Lower lobe of right lung (tissue), 2 donors: ENCODE measurements at regions of chr9 and their contacts with region 1.

Region 1: DNA sequence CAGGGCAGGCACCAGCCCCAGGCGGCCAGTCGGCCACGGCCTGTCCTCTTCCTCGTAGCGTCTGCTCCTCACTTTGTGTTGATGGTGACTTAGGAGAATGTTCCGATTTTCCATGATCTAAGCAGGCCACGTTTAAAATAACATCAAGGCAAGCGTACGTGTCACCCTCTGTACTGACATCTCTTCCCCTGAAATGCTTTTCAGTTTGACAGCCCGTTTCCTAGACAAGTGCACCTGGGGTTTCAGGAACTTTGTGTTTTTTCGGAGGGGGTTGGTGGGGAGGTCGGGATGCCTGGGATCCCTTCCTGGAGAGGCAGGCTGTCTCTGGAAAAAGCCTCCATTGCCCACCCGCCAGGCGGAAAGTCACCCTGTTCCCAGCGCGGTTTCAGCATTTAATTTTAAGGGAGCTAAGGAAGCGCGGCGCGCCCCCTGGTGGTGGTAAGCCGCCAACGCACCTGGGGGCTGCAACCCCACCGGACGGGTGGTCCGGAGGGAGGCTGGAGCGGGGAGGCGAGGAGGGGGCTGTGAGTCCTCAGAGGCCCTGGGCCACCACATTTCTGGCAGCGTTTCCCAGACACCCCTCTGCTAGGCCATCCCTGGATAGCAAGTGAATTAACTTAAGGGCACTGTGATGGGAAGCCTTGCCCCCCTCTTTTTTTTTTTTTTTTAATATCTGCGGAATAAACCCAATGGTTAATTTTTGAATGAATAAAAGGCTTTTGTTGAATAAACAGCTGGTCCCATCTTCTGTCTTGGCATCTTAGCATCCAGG is 29.5 kb upstream of the HMCN2 start:
- DNase-seq: peak; percentile 84
- ATAC-seq: peak; percentile 26 to 62
- H3K4me3 ChIP-seq: no peak overlapping the region
- H3K27ac ChIP-seq: no peak overlapping the region
- H3K4me1 ChIP-seq: peaks cover 20% of the 10 kb centered on the region
- H3K27me3 ChIP-seq: no peaks in the 10 kb centered on the region
- CTCF ChIP-seq: peak; percentile 99

Region 2: DNA sequence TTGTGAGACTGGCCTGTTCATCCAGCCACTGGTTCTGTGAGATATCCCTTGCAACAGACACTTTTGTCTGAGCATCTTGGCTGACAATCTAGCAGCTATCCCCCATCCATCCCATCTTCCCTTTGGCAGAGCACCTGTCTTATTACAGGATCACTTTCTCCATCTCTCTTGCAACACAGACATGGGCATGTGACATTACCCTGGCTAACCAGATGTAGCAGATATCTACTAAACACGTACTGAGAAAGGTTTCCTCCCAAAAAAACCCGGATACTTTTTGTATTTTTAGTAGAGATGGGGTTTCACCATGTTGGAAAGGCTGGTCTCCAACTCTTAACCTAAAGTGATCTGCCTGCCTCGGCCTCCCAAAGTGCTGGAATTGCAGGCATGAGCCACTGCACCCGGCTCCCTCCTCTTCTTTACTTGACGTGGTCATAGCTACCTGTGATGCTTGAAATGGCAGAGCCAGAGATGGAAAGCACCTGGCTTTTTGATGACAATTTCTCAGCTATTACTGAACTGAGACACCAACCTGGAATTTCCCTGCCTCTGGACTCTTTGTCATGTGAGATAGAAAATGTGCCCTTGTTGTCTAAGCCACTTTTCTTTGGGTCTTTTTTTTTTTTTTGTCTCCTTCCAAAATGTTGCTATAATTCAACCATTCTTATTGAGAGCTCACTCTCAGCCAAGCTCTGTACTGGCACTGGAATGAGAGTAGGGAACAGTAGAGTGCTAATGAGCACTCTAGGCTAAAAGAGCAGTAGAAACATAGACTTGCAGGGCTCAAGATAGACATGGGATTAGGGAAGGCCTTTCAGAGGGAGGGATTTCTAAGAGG is 225.7 kb before region 1 on chr9:
- intact Hi-C with region 1: no loop called
- DNase-seq: no peak
- ATAC-seq: no peak
- H3K4me3 ChIP-seq: no peak overlapping the region
- H3K27ac ChIP-seq: no peak overlapping the region
- H3K4me1 ChIP-seq: peaks cover 9% of the 10 kb centered on the region
- H3K27me3 ChIP-seq: no peaks in the 10 kb centered on the region
- CTCF ChIP-seq: no peak

Region 3: DNA sequence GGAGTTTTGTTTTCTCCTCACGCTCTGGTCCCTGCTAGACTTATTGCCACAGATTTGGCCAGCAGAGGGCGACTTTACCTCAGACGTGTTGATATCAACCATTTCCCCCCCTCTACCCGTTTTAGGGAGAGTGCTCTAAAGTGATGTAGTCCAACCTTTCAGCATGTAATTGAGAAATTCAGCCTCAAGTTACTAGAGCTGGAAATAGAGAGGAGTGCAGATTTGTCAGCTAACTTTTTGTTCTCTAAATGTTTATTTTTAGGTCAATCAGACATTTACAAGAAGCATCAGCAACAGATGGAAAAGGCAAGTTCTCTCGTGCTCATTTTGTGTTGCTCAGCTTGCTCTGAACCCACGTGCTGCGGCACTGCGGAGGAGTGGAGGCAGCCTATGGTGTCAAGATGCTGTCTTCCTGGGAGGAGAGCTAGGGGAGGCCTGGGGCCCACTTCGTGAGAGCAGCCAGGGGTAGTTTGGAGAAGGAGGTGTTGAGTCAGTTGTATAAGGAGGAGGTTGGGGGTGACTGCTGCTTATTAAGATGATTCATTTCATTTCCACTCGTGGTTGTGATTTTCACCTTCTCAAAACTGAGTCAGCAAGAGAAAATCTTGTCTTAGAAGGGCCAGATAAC is 128.7 kb before region 1 on chr9:
- intact Hi-C with region 1: loop called (anchors 10 kb)
- DNase-seq: peak; percentile 84
- ATAC-seq: peak; percentile 81 to 86
- H3K4me3 ChIP-seq: no peak overlapping the region
- H3K27ac ChIP-seq: no peak overlapping the region
- H3K4me1 ChIP-seq: peaks cover 6% of the 10 kb centered on the region
- H3K27me3 ChIP-seq: no peaks in the 10 kb centered on the region
- CTCF ChIP-seq: peak; percentile 73

Region 4: GRCh38 chr9:130118841-130119518 is 117.1 kb before region 1 on chr9:
- intact Hi-C with region 1: no loop called
- DNase-seq: no peak
- ATAC-seq: no peak
- H3K4me3 ChIP-seq: no peak overlapping the region
- H3K27ac ChIP-seq: no peak overlapping the region
- H3K4me1 ChIP-seq: no peaks in the 10 kb centered on the region
- H3K27me3 ChIP-seq: no peaks in the 10 kb centered on the region
- CTCF ChIP-seq: no peak

Region 5: GRCh38 chr9:130186839-130187522 is 49.1 kb before region 1 on chr9:
- intact Hi-C with region 1: no loop called
- DNase-seq: peak; percentile 58
- ATAC-seq: peak; percentile 84 to 85
- H3K4me3 ChIP-seq: no peak overlapping the region
- H3K27ac ChIP-seq: no peak overlapping the region
- H3K4me1 ChIP-seq: peaks cover 18% of the 10 kb centered on the region
- H3K27me3 ChIP-seq: no peaks in the 10 kb centered on the region
- CTCF ChIP-seq: no peak

Region 6: DNA sequence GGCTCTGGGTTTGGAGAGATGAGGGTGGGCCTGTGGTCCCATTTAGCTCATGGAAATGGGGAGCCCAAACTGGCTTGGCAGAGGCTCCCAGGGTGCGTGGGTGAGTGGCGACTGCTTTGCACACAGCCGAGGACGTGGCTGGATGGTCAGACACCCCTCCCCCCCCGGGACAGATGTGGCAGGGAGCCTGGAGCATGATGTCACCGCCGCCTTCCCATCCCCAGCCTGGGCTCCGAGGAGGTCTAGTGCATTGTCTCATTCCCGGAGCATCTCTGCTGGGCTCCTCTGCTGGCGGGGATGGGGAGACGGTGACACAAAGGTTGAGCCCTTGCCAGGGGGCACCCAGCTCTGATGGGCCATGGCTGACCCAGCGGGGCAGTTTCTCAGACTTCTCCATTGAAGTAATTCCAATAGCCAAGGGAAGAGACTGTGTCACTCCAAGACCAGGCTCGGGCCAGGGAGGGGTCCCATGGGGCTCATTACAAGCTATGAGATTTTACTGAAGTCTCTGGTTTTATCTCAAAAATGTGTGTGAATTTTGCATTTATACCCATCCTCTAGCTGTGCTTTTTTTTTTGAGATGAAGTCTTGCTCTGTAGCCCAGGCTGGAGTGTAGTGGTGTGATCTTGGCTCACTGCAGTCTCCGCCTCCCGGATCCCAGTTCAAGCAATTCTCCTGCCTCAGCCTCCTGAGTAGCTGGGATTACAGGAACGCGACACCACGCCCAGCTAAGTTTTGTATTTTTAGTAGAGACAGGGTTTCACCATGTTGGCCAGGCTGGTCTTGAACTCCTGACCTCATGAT is 65.6 kb after region 1 on chr9:
- intact Hi-C with region 1: no loop called
- DNase-seq: no peak
- ATAC-seq: peak; percentile 7 to 18
- H3K4me3 ChIP-seq: no peak overlapping the region
- H3K27ac ChIP-seq: no peak overlapping the region
- H3K4me1 ChIP-seq: no peaks in the 10 kb centered on the region
- H3K27me3 ChIP-seq: peaks cover 6% of the 10 kb centered on the region
- CTCF ChIP-seq: no peak